Activated CD4-positive, alpha-beta memory T cell treated with anti-CD3 and anti-CD28 coated beads, Interleukin-2, amount 10 ng/mL, durations not matched to agents 7 days and 5 days (primary cell): ENCODE measurements at regions of chr4 and their contacts with region 1.

Region 1: GRCh38 chr4:6640292-6641163 is at the start of gene MRFAP1:
- DNase-seq: peak; percentile 96
- H3K4me3 Mint-ChIP-seq: peak within 1 kb of the TSS; percentile 98
- H3K27ac Mint-ChIP-seq: peak within 1 kb of the TSS; percentile 100
- H3K4me1 Mint-ChIP-seq: peaks cover 23% of the 10 kb centered on the region
- H3K27me3 Mint-ChIP-seq: no peaks in the 10 kb centered on the region
- total RNA-seq, gene MRFAP1: 142 to 144 TPM

Region 2: GRCh38 chr4:6470502-6471306 is 169.8 kb before region 1 on chr4:
- CTCF ChIA-PET with region 1: no interaction called
- POLR2A ChIA-PET with region 1: no interaction called
- DNase-seq: peak; percentile 17
- H3K4me3 Mint-ChIP-seq: no peak overlapping the region
- H3K27ac Mint-ChIP-seq: no peak overlapping the region
- H3K4me1 Mint-ChIP-seq: peaks cover 3% of the 10 kb centered on the region
- H3K27me3 Mint-ChIP-seq: peaks cover 71% of the 10 kb centered on the region

Region 3: DNA sequence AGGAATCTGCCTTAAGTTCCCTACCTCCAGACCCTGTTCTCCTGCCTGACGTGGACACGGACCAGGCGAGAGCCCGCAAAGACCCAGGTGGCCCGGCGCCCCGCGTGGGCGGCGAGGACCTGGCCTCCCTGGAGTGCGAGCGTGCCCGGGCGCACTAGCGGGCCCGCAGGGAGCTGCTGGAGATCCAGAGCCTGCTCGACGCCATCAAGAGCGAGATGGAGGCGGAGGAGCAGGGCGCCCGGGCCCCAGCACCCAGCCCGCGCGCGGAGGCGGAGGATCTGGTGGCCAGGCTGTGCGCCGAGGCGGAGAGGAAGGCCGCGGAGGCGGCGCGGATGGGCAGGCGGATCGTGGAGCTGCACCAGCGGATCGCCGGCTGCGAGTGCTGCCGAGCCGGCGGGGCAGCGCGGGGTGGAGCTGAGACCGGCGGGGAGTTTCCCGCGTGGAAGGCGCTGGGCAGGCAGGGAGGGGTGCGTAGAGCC is 18.1 kb after region 1 on chr4:
- CTCF ChIA-PET with region 1: interaction called, 9 read pairs
- POLR2A ChIA-PET with region 1: interaction called, 15 read pairs
- DNase-seq: peak; percentile 43
- H3K4me3 Mint-ChIP-seq: peak overlapping the region; percentile 60
- H3K27ac Mint-ChIP-seq: no peak overlapping the region
- H3K4me1 Mint-ChIP-seq: peaks cover 8% of the 10 kb centered on the region
- H3K27me3 Mint-ChIP-seq: peaks cover 41% of the 10 kb centered on the region

Region 4: DNA sequence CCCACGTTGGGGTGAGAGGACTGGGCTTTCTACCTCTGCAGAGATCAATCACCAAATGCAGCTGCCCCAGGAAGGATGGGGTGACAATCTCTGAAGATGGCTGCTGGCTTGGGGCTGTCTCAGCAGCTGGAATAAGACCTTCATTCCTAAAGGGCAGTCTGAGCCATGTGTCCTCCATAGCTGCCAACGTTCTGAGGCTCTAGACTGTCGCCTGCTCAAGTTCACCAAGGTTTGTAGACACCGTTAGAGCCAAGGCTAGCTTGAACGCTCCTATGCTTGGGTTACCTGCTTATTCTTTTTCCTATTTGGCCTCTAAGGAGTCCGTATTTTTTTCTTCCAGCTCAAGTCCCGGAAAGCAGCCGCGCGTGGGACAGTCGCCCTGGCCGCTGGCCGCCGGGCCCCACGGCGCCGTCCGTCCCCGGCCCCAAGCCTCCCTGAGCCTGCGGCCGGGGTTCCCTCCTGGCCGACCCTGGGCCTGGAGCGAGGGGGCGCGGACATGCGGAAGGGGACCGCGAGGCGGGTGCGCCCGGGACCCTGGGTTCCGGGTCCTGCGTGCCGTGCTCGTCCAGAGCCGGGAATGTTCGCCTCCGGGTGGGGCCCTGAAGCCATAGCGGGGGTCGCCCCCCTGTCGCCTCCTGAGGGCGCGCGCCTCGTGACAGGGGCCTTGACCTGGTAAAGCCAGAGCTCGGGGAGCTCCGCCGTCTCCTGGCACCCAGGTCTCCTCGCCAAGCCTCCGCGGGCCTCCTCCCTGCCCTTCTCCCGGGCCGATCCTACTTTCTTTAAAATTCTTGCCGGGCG is 23.3 kb after region 1 on chr4:
- CTCF ChIA-PET with region 1: interaction called, 9 read pairs
- POLR2A ChIA-PET with region 1: interaction called, 15 read pairs
- DNase-seq: no peak
- H3K4me3 Mint-ChIP-seq: peak overlapping the region; percentile 32
- H3K27ac Mint-ChIP-seq: no peak overlapping the region
- H3K4me1 Mint-ChIP-seq: peaks cover 5% of the 10 kb centered on the region
- H3K27me3 Mint-ChIP-seq: peaks cover 39% of the 10 kb centered on the region

Region 5: DNA sequence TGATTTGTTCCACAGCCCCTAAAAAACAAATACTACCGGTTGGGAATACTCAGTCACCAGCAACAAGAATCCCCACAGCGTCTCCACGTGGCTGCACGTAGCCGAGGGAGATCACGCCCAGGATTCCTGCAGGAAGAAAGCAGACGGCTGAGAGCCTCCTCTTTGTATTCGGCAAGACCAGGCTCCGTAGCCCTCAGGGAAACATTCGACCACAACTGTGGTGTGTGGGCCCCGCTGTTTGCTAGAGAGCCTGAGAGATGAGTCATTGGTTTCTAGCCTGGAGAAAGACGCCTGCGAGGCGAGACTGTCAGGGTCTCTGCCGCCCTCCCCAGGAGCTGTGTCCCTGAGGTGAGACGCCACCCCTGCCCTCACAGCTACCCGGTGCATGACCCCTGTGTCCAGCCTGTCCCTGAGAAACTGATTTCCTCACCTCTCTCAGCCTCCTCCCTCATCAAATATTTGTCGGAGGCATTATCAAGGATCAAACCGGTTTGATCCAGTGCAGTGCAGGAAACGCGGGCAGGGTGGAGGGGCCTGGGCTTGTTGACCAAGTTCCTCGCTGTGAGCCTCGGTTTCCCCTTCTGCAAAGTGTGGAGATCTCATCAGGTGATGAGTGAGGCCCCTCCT is 48.5 kb after region 1 on chr4:
- CTCF ChIA-PET with region 1: interaction called, 5 read pairs
- POLR2A ChIA-PET with region 1: interaction called, 40 read pairs
- DNase-seq: peak; percentile 91
- H3K4me3 Mint-ChIP-seq: peak overlapping the region; percentile 81
- H3K27ac Mint-ChIP-seq: peak overlapping the region; percentile 97
- H3K4me1 Mint-ChIP-seq: peaks cover 87% of the 10 kb centered on the region
- H3K27me3 Mint-ChIP-seq: no peaks in the 10 kb centered on the region

Region 6: GRCh38 chr4:6695660-6696630 is 55.4 kb after region 1 on chr4:
- CTCF ChIA-PET with region 1: interaction called, 5 read pairs
- POLR2A ChIA-PET with region 1: interaction called, 40 read pairs
- DNase-seq: peak; percentile 77
- H3K4me3 Mint-ChIP-seq: peak overlapping the region; percentile 61
- H3K27ac Mint-ChIP-seq: peak overlapping the region; percentile 92
- H3K4me1 Mint-ChIP-seq: peaks cover 88% of the 10 kb centered on the region
- H3K27me3 Mint-ChIP-seq: no peaks in the 10 kb centered on the region

Region 7: DNA sequence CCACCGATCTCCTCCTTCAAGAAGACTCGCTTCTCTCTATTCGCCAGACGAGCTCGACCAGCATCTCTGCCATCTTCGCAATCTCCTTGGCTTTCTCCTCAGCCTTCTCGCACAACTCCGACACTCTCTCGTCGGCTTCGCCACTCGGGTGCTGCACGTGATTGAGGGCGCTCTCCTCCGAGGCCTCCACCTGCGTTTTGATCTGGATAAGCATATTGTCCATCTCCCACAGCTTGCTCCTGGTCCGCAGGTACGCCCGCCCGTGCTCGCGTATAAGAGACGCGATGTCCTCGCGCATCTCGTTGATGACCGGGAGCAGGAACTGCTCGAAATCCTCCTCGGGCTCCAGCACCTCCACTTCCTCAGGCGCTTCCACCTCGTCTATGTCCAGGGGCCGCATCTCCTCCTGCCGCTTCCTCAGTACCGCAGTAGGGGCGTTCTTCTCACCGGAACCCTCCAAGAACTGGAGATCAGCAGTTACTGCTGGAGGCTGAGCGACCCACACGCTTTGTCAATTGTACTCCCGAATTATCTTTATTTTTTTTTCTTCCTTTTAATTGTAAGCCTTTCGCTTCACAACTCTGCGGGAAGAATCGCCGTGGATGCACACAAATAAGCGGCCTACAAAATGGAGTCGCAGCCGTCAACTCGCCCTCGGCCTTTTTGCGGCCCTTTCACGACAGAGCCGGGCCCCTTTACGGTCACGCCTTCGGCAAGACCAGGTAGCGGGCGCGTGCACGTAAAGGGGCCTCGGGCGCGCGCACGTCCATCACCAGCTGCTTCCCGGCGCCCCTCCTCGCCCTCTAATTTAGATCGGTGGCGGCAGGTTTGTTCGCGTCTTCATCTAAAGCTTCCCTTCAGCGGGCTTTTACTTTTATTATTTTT is 68.9 kb after region 1 on chr4 and contains the start of gene MRFAP1L1:
- CTCF ChIA-PET with region 1: no interaction called
- POLR2A ChIA-PET with region 1: interaction called, 40 read pairs
- DNase-seq: peak; percentile 98
- H3K4me3 Mint-ChIP-seq: peak within 1 kb of the TSS; percentile 99
- H3K27ac Mint-ChIP-seq: peak within 1 kb of the TSS; percentile 97
- H3K4me1 Mint-ChIP-seq: peaks cover 49% of the 10 kb centered on the region
- H3K27me3 Mint-ChIP-seq: no peaks in the 10 kb centered on the region
- total RNA-seq, gene MRFAP1L1: 81.9 to 83.1 TPM